ENCODE measurements at regions of chr20 and their contacts with region 1.

Region 1: GRCh38 chr20:49541733-49542513 is 26.0 kb downstream of the PTGIS start:
- DNase-seq: no peak
- H3K4me3 ChIP-seq: no peak overlapping the region
- H3K27me3 ChIP-seq: no peaks in the 10 kb centered on the region
- CTCF ChIP-seq: peak; percentile 79

Region 2: GRCh38 chr20:49338061-49338460 is 203.9 kb before region 1 on chr20:
- CTCF ChIA-PET with region 1: interaction called, 62 read pairs
- POLR2A ChIA-PET with region 1: no interaction called
- DNase-seq: no peak
- H3K4me3 ChIP-seq: no peak overlapping the region
- H3K27me3 ChIP-seq: peaks cover under 1% of the 10 kb centered on the region; the same call in 1 of the 2 replicates
- CTCF ChIP-seq: no peak

Region 3: GRCh38 chr20:49557449-49557848 is 15.5 kb after region 1 on chr20:
- CTCF ChIA-PET with region 1: interaction called, 62 read pairs
- POLR2A ChIA-PET with region 1: no interaction called
- DNase-seq: no peak
- H3K4me3 ChIP-seq: no peak overlapping the region
- H3K27me3 ChIP-seq: no peaks in the 10 kb centered on the region
- CTCF ChIP-seq: no peak

Region 4: GRCh38 chr20:49575551-49576060 is 33.7 kb after region 1 on chr20:
- CTCF ChIA-PET with region 1: interaction called, 10 read pairs
- POLR2A ChIA-PET with region 1: no interaction called
- DNase-seq: no peak
- H3K4me3 ChIP-seq: no peak overlapping the region
- H3K27me3 ChIP-seq: no peaks in the 10 kb centered on the region; the same call in 1 of the 2 replicates
- CTCF ChIP-seq: no peak

Region 5: DNA sequence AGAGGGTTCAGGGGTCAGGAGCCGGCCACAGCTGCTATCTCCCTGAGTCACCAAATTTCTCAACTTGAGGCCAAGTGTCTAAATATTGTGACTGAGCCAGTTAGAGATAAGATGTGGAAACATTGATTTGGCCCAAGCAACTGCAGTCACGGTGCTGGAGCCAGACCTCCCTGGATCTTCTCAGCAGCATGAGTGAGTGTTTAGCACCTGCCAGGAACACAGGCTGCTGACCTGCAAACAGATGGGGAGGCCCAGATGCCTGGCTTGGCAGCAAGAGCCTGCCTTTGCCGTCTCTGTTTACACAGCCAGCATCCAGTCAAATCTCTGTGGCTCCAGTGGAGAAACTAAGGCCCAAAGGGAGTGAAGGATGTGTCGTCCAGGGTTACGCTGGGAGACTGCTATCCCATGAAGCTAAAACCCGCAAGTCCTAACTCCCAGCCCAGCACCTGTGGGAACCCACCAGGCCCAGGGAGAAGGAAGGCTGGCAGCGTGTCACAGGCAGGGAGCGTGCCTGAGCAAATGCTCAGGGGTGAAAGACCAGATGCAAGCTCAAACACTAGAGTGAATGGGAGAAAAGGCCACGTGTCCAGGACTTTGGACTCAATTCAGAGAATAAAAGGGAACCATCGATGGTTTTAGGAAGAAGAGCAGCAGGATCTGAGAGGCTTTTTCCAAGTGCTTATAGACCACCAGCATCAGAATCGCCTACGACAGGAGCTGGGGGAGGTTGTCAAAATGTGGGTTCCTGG is 41.9 kb after region 1 on chr20:
- CTCF ChIA-PET with region 1: interaction called, 31 read pairs
- POLR2A ChIA-PET with region 1: no interaction called
- DNase-seq: peak; percentile 85
- H3K4me3 ChIP-seq: no peak overlapping the region
- H3K27me3 ChIP-seq: no peaks in the 10 kb centered on the region
- CTCF ChIP-seq: peak; percentile 12; the same call in 1 of the 2 replicates

Region 6: GRCh38 chr20:49594143-49594930 is 52.4 kb after region 1 on chr20:
- CTCF ChIA-PET with region 1: interaction called, 32 read pairs
- POLR2A ChIA-PET with region 1: no interaction called
- DNase-seq: peak; percentile 92
- H3K4me3 ChIP-seq: no peak overlapping the region
- H3K27me3 ChIP-seq: no peaks in the 10 kb centered on the region
- CTCF ChIP-seq: no peak

Region 7: GRCh38 chr20:49846206-49846807 is 304.4 kb after region 1 on chr20:
- CTCF ChIA-PET with region 1: interaction called, 21 read pairs
- POLR2A ChIA-PET with region 1: no interaction called
- DNase-seq: no peak
- H3K4me3 ChIP-seq: no peak overlapping the region
- H3K27me3 ChIP-seq: no peaks in the 10 kb centered on the region
- CTCF ChIP-seq: peak; percentile 59

Measured in BJ (cell line).